ENCODE measurements at regions of chr6 and their contacts with region 1.

Region 1: DNA sequence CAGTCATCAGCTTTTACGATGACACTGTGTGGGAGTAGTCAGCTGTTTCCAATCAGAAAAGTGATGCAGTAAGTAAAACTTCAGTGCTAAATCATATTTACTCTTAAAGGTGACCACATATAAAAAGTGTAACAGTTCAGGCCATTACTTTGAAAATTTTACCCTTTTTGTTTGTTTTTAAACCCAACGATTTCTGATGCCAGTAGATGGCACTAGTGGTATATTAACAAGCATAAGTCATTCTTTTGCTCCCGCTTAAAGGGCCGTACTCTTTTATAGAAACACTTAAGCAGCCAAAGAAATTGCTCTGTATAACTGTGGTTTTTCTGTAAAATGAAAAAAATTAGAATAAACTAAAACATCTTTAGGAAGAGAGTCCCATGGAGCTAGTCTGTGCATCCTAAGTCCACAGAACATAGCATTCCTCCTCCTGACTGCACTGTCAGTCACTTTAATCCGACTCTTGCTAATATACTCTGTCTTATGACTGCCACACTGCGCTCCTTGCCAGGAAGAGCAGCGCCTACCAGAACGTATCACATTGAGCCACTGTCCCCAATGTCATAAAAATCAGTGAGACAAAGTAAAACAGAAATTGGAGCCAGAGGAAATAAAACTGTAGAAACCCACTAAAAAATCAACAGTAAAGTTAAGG is 25.0 kb downstream of the HEBP2 start:
- DNase-seq: no peak
- H3K4me3 ChIP-seq: no peak overlapping the region
- H3K27ac ChIP-seq: no peak overlapping the region
- H3K4me1 ChIP-seq: peaks cover 0 to 28% (median 18%) of the 10 kb centered on the region in 6 donors
- H3K27me3 ChIP-seq: peaks cover 0 to 12% (median 0%) of the 10 kb centered on the region in 7 donors
- CTCF ChIP-seq: peak in 10 of 11 experiments; percentile 12 to 62 (median 52)
- POLR2A ChIP-seq: no peak

Region 2: DNA sequence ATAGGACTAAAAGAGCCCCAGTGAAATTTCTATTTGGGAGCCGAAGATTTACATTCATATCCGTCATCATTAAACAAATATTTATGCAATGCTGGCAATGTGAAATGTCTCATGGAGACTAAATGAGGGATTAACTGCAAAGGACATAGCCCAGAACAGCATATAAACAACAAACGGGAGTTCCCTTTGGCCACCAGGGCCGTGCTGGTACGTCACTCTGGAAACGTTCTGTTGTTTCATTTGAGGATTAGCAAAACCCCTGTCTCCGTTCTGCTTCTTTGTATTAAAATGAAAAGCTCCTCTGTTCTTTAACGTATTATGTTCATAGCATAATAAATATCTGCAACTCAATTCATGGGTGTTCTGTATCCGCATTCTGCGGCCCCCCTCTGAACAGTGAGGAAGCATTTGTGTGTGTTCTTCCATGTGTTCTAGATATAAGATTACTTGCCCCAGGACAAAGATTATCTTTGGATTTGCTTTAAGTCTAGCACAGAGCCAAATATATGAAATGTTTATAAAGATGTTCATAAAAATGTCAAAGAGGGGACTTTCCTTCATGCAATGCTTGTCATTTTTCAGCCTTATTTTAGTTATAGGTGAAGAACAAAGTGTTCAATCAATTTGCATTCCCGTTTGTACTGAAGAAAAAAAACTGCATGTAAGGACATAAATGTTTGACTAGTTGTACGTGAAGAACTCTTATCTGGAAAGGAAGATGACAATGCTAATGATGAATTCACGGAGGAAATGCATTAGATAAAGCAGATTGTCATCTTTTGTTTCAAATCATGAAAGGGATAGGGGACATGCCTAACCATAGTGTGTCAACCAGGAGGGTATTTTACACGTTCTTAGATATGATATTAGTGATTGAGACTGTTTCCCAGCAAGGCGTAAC is 652.0 kb before region 1 on chr6:
- intact Hi-C with region 1: no loop called
- DNase-seq: no peak
- H3K4me3 ChIP-seq: no peak overlapping the region
- H3K27ac ChIP-seq: no peak overlapping the region
- H3K4me1 ChIP-seq: peaks cover 0 to 19% (median 0%) of the 10 kb centered on the region in 6 donors
- H3K27me3 ChIP-seq: no peaks in the 10 kb centered on the region
- CTCF ChIP-seq: no peak
- POLR2A ChIP-seq: no peak

Region 3: DNA sequence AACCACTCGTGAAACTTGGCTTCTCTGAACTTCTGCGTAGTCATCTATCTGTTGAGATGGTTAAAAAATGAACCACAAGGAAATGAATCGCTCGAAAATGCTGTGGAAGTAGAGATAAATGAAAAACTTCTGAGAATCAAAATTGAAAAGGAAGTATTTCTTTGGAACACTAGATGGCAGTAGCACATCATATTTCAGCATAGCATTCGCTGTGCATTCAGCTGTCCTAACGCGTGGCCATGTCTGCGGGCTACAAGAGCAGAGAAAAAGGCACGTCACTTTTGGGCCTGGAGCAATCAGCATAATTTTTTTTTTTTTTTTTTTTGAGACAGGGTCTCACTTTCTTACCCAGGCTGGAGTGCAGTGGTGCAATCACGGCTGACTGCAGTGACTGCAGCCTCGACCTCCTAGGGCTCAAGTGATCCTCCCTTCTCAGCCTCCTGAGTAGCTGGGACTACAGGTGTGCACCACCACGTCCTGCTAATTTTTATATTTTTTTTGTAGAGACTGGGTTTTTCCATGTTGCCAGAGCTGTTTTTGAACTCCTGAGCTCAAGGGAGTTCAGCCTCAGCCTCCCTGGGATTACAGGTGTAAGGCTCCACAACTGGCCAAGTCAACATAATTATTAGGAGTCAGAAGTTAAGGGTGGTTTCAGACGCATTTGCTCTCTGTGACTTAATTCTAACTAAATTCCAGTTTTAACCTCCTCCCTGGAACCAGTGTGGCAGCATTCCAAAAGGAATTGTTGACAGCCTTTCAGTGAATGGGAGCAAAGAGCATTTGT is 313.0 kb before region 1 on chr6:
- intact Hi-C with region 1: loop called (anchors 10 kb)
- DNase-seq: peak; percentile 83
- H3K4me3 ChIP-seq: no peak overlapping the region
- H3K27ac ChIP-seq: no peak overlapping the region
- H3K4me1 ChIP-seq: peaks cover 0 to 10% (median 2%) of the 10 kb centered on the region in 6 donors
- H3K27me3 ChIP-seq: peaks cover 0 to 24% (median 0%) of the 10 kb centered on the region in 7 donors
- CTCF ChIP-seq: peak; percentile 40 to 82 (median 70)
- POLR2A ChIP-seq: no peak

Region 4: GRCh38 chr6:138517635-138518034 is 88.6 kb after region 1 on chr6:
- intact Hi-C with region 1: loop called (anchors 5 kb)
- DNase-seq: peak; percentile 84
- H3K4me3 ChIP-seq: no peak overlapping the region
- H3K27ac ChIP-seq: no peak overlapping the region
- H3K4me1 ChIP-seq: peaks cover 0 to 25% (median 6%) of the 10 kb centered on the region in 6 donors
- H3K27me3 ChIP-seq: no peaks in the 10 kb centered on the region
- CTCF ChIP-seq: peak; percentile 45 to 87 (median 67)
- POLR2A ChIP-seq: no peak

Region 5: DNA sequence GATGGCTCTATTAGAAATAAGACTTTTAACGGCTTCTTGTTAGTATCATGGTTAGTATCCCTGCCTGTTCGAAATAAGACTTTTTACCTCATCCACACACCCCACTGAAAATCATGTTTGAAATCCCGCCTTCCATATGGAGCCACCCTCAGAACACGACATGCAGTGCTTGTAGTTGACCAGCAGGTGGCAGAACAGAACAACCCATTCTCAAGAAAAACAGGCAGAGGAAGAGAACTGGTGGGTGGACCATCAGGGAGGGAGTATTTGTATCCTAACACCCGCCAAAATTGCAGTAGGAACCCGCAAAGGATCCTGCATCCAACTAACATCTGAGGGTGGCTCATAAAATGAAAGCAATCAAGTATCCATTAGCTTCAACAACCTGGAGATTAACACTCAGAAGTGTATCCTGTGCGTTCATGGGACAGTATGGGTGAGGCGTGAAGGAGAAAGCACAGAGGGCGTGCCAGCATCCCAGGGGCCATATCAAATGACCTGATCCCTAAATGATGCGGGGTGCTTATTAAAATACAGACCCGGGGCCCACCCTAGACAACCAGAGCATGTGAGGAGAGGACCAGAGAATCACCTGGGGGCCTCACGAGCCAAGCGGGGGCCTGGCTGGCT is 159.8 kb after region 1 on chr6:
- intact Hi-C with region 1: loop called (anchors 10 kb)
- DNase-seq: no peak
- H3K4me3 ChIP-seq: no peak overlapping the region
- H3K27ac ChIP-seq: no peak overlapping the region
- H3K4me1 ChIP-seq: peaks cover 11 to 39% (median 25%) of the 10 kb centered on the region in 6 donors
- H3K27me3 ChIP-seq: no peaks in the 10 kb centered on the region
- CTCF ChIP-seq: peak; percentile 83 to 96 (median 92)
- POLR2A ChIP-seq: no peak

Region 6: GRCh38 chr6:138795809-138796603 is 366.9 kb after region 1 on chr6 and contains the start of gene ECT2L:
- intact Hi-C with region 1: no loop called
- DNase-seq: peak; percentile 86
- H3K4me3 ChIP-seq: peak within 1 kb of the TSS; percentile 13 to 55 (median 22)
- H3K27ac ChIP-seq: peak within 1 kb of the TSS in 3 of 8 donors; percentile 4 to 57 (median 12)
- H3K4me1 ChIP-seq: peaks cover 0 to 13% (median 2%) of the 10 kb centered on the region in 6 donors
- H3K27me3 ChIP-seq: peaks cover 0 to 18% (median 4%) of the 10 kb centered on the region in 7 donors
- CTCF ChIP-seq: no peak
- POLR2A ChIP-seq: no peak
- total RNA-seq, gene ECT2L: 0.13 TPM in 1 of 7 donors, not detected in the others

Measured in spleen (tissue), 13 donors.